Activated CD4-positive, alpha-beta T cell treated with anti-CD3 and anti-CD28 coated beads, Interleukin-2, amount 10 ng/mL, durations not matched to agents 7 days and 5 days (primary cell): ENCODE measurements at regions of chr17 and their contacts with region 1.

Region 1: GRCh38 chr17:29116804-29117772 is 63.1 kb downstream of the MYO18A start:
- DNase-seq: peak; percentile 77
- H3K4me3 Mint-ChIP-seq: no peak overlapping the region
- H3K27ac Mint-ChIP-seq: no peak overlapping the region
- H3K4me1 Mint-ChIP-seq: peaks cover 5% of the 10 kb centered on the region
- H3K27me3 Mint-ChIP-seq: no peaks in the 10 kb centered on the region

Region 2: DNA sequence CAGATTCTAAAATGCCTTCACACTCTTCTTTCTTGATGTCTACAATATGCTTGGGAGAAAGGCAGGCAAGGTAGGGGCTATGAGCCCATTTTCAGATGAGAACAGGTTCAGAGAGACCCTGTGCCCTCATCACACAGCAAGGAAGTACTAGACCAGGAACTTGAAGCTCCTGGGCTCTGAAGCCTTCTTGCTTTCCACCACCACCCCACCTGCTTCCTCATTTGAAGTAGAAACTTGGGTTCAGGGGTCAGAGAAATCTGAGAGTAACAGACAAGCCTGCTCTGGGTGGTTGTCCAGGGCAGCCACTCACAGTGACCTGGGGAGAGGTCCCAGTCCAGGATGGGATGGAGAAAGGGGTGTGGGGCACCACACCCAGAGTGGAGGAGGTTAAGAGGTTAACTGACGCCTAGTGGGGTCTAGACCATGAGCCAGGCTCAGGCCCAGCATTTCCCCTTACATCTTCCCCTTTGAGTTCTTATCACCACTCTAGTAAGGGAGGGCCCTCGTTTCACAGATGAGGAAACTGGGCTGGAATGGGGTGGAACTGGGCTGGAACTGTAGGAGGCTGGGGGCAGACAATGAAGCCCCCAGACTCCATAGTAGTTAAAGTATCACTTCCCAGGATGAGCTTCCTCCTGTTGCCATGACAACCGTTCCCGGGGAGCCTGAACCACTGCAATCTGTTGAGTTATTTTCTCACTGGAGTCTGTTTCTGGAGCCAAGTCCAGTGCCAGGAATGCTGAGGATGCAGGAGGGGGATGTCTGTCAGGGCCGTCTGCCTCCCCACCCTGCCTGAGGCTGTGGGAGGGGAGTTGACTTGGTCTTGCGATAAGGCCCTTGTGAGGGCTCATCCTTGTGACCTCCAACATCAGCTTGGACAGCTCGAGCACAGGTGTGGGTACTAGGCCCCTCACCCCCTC is 149.6 kb before region 1 on chr17:
- CTCF ChIA-PET with region 1: interaction called, 33 read pairs
- POLR2A ChIA-PET with region 1: no interaction called
- DNase-seq: no peak
- H3K4me3 Mint-ChIP-seq: no peak overlapping the region
- H3K27ac Mint-ChIP-seq: peak overlapping the region; percentile 26
- H3K4me1 Mint-ChIP-seq: no peaks in the 10 kb centered on the region
- H3K27me3 Mint-ChIP-seq: peaks cover 9% of the 10 kb centered on the region

Region 3: GRCh38 chr17:29080965-29081364 is 36.1 kb before region 1 on chr17:
- CTCF ChIA-PET with region 1: interaction called, 14 read pairs
- POLR2A ChIA-PET with region 1: no interaction called
- DNase-seq: no peak
- H3K4me3 Mint-ChIP-seq: no peak overlapping the region
- H3K27ac Mint-ChIP-seq: no peak overlapping the region
- H3K4me1 Mint-ChIP-seq: no peaks in the 10 kb centered on the region
- H3K27me3 Mint-ChIP-seq: no peaks in the 10 kb centered on the region

Region 4: DNA sequence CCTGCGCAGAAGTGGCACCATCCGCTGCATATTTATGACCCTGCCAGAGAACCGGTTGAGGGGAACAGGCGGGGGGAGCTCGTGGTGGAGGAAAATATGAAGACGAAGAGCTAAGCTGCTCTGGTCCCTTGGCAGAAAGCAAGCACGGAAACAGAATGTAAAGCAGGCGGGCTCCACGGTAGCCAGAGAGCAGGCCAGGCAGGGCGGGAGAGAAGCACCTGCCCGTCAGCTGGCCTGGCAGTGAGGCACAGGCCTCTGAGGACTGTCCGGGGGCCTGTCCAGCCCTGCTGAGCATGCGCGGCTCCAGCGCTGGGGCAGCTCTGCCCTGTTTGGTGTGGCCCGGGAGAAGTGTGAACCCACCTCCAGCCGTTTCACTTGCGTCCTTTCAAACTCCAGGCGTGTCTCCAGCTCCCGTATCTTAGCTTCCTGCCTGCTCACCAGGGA is 27.5 kb before region 1 on chr17:
- CTCF ChIA-PET with region 1: interaction called, 16 read pairs
- POLR2A ChIA-PET with region 1: no interaction called
- DNase-seq: no peak
- H3K4me3 Mint-ChIP-seq: no peak overlapping the region
- H3K27ac Mint-ChIP-seq: peak overlapping the region; percentile 25
- H3K4me1 Mint-ChIP-seq: no peaks in the 10 kb centered on the region
- H3K27me3 Mint-ChIP-seq: no peaks in the 10 kb centered on the region

Region 5: DNA sequence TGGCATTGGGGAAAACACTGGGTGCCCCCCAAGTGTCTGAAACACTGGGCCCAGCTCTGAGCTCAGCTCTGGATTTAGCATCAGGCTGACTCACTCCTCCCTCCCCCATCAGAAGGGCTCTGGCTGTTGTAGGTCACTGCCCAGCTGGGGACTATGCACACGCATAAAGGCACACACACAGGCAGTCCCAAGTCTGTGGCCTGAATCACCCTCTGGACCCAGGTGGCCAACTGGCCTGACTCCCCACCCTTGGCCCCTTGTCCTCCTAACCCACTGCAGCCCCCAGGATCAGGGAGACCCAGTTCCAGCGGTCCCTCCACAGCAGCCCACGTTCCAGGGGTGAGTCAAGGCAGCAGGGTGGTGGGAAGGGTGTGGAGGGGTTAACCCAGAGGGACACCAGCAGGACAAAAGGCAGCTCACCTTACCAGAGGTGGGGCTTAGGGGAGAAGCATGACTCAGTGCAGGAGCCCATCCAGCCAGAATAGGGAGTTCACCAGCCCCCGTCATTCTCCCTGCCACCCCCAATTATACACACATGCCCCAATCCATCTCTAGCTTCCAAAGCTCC is 16.1 kb after region 1 on chr17:
- CTCF ChIA-PET with region 1: interaction called, 56 read pairs
- POLR2A ChIA-PET with region 1: no interaction called
- DNase-seq: no peak
- H3K4me3 Mint-ChIP-seq: no peak overlapping the region
- H3K27ac Mint-ChIP-seq: no peak overlapping the region
- H3K4me1 Mint-ChIP-seq: peaks cover 57% of the 10 kb centered on the region
- H3K27me3 Mint-ChIP-seq: no peaks in the 10 kb centered on the region